B cell (primary cell): ENCODE measurements at regions of chr11 and their contacts with region 1.

Region 1: GRCh38 chr11:65888163-65888814 is at the start of gene FIBP:
- DNase-seq: peak; percentile 96
- ATAC-seq: peak; percentile 64
- H3K4me3 ChIP-seq: peak within 1 kb of the TSS; percentile 63 to 88 (median 75)
- H3K4me3 Mint-ChIP-seq: peak within 1 kb of the TSS; percentile 98
- H3K27ac ChIP-seq: peak within 1 kb of the TSS; percentile 85
- H3K27ac Mint-ChIP-seq: peak within 1 kb of the TSS; percentile 98
- H3K4me1 ChIP-seq: peaks cover 47 to 63% of the 10 kb centered on the region in 2 donors
- H3K4me1 Mint-ChIP-seq: peaks cover 66% of the 10 kb centered on the region
- H3K27me3 ChIP-seq: no peaks in the 10 kb centered on the region
- H3K27me3 Mint-ChIP-seq: no peaks in the 10 kb centered on the region
- CTCF ChIP-seq: peak; percentile 86
- total RNA-seq, gene FIBP: 59.8 and 63.4 TPM in 2 replicates

Region 2: DNA sequence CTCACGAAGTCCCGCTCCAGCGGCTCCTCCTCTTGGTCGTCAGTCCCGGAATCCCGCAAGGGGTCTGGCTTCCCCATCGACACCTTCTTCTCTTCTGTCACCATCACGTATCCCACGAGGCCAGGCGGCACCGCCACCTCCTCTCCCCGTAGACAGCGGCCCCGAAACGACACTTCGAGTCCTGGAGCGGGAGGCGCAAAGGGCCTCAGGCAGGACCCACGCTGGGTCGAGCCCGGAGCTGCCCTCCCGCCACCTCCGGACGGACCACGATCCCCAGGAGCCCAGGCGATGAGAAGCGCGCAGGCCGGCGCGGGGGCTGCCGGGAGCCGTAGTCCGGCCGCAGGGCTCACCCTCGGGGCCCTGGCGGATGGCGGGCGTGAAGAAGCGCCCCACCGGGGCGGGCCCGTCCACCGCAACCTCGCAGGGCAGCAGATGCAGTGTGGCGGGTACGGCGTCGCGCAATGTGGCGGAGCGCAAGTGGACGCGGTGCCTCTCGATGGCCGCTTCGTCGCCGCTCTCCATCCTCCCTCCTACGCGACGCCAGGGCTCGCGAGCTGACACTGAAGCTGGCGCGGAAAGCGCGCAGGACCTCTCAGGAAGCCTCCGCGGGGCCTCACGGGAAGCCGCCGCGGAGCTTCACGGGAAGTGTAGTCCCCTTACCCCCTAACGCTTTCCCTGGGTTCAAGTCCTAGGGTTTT is 167.9 kb before region 1 on chr11 and contains the start of gene RNASEH2C:
- CTCF ChIA-PET with region 1: interaction called, 14 read pairs
- POLR2A ChIA-PET with region 1: interaction called, 4 read pairs
- intact Hi-C with region 1: no loop called
- DNase-seq: peak; percentile 89
- ATAC-seq: peak; percentile 92
- H3K4me3 ChIP-seq: peak within 1 kb of the TSS; percentile 59 to 84 (median 74)
- H3K4me3 Mint-ChIP-seq: peak within 1 kb of the TSS; percentile 97
- H3K27ac ChIP-seq: peak within 1 kb of the TSS; percentile 59 to 73
- H3K27ac Mint-ChIP-seq: peak within 1 kb of the TSS; percentile 91
- H3K4me1 ChIP-seq: peaks cover 14 to 16% of the 10 kb centered on the region in 2 donors
- H3K4me1 Mint-ChIP-seq: peaks cover 35% of the 10 kb centered on the region
- H3K27me3 ChIP-seq: no peaks in the 10 kb centered on the region
- H3K27me3 Mint-ChIP-seq: no peaks in the 10 kb centered on the region
- CTCF ChIP-seq: no peak
- total RNA-seq, gene RNASEH2C: 75.3 and 81.6 TPM in 2 replicates

Region 3: GRCh38 chr11:65833297-65834030 is 54.8 kb before region 1 on chr11 and contains the start of gene SNX32:
- CTCF ChIA-PET with region 1: interaction called, 10 read pairs
- POLR2A ChIA-PET with region 1: no interaction called
- intact Hi-C with region 1: no loop called
- DNase-seq: peak; percentile 96
- ATAC-seq: peak; percentile 99
- H3K4me3 ChIP-seq: peak within 1 kb of the TSS; percentile 47 to 81 (median 67)
- H3K4me3 Mint-ChIP-seq: no peak within 1 kb of the TSS
- H3K27ac ChIP-seq: peak within 1 kb of the TSS; percentile 71 to 86
- H3K27ac Mint-ChIP-seq: peak within 1 kb of the TSS; percentile 50
- H3K4me1 ChIP-seq: peaks cover 13 to 21% of the 10 kb centered on the region in 2 donors
- H3K4me1 Mint-ChIP-seq: peaks cover 8% of the 10 kb centered on the region
- H3K27me3 ChIP-seq: peaks cover 0 to 4% (median 0%) of the 10 kb centered on the region in 4 experiments
- H3K27me3 Mint-ChIP-seq: no peaks in the 10 kb centered on the region
- CTCF ChIP-seq: no peak
- total RNA-seq, gene SNX32: 0.34 and 0.57 TPM in 2 replicates

Region 4: DNA sequence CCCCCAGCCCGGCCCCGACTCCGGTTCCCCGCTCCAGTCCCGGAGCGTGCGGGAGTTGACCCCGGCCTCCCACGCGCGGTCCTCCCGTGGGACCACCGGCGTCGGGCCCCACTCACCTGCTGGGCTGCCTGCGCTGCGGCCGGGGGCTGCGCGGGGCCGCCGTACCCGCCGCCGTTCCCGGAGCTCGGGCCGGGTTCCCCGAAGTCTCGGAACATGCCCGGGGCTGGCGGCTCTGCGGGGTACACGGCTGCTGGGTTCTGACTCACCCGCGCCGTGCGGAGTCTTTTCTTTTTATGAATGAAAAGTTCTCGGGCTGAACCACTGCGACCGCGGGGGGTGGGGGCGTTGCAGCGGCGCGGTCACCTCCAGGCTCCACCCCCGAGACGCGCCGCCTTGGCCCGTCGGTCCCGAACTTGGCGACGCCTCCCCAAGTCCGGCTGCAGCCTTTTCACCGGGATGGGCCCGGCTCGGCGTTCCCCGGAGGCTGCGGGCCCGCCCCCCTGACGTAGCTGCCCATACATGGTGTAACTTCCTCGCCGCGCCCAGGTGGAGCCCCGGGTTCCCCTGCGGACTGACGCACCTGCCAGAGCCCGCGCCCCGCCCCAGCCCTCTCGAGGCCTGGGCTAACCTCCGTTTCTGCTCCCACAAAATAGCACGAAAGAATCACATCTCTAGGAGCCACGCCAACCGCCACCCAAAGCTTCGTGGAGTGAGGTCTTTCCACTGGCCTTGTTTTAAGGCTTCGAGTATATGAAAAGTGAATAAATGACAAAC is 12.0 kb after region 1 on chr11 and contains the start of gene FOSL1:
- CTCF ChIA-PET with region 1: interaction called, 44 read pairs
- POLR2A ChIA-PET with region 1: interaction called, 33 read pairs
- intact Hi-C with region 1: loop called (anchors 1 kb)
- DNase-seq: peak; percentile 96
- ATAC-seq: peak; percentile 95
- H3K4me3 ChIP-seq: peak within 1 kb of the TSS; percentile 2 to 64 (median 52)
- H3K4me3 Mint-ChIP-seq: peak within 1 kb of the TSS; percentile 83
- H3K27ac ChIP-seq: no peak within 1 kb of the TSS
- H3K27ac Mint-ChIP-seq: peak within 1 kb of the TSS; percentile 72
- H3K4me1 ChIP-seq: peaks cover 20% of the 10 kb centered on the region in 2 donors
- H3K4me1 Mint-ChIP-seq: peaks cover 10% of the 10 kb centered on the region
- H3K27me3 ChIP-seq: peaks cover 0 to 38% (median 12%) of the 10 kb centered on the region in 4 experiments
- H3K27me3 Mint-ChIP-seq: peaks cover 15% of the 10 kb centered on the region
- CTCF ChIP-seq: no peak
- total RNA-seq, gene FOSL1: not detected in 2 replicates

Region 5: GRCh38 chr11:65934014-65934413 is 45.7 kb after region 1 on chr11:
- CTCF ChIA-PET with region 1: interaction called, 18 read pairs
- POLR2A ChIA-PET with region 1: interaction called, 4 read pairs
- intact Hi-C with region 1: loop called (anchors 2 kb)
- DNase-seq: no peak
- ATAC-seq: no peak
- H3K4me3 ChIP-seq: no peak overlapping the region
- H3K4me3 Mint-ChIP-seq: no peak overlapping the region
- H3K27ac ChIP-seq: no peak overlapping the region
- H3K27ac Mint-ChIP-seq: no peak overlapping the region
- H3K4me1 ChIP-seq: peaks cover under 1 to 1% of the 10 kb centered on the region in 2 donors
- H3K4me1 Mint-ChIP-seq: peaks cover 4% of the 10 kb centered on the region
- H3K27me3 ChIP-seq: peaks cover 0 to 3% (median 0%) of the 10 kb centered on the region in 4 experiments
- H3K27me3 Mint-ChIP-seq: no peaks in the 10 kb centered on the region
- CTCF ChIP-seq: no peak

Region 6: DNA sequence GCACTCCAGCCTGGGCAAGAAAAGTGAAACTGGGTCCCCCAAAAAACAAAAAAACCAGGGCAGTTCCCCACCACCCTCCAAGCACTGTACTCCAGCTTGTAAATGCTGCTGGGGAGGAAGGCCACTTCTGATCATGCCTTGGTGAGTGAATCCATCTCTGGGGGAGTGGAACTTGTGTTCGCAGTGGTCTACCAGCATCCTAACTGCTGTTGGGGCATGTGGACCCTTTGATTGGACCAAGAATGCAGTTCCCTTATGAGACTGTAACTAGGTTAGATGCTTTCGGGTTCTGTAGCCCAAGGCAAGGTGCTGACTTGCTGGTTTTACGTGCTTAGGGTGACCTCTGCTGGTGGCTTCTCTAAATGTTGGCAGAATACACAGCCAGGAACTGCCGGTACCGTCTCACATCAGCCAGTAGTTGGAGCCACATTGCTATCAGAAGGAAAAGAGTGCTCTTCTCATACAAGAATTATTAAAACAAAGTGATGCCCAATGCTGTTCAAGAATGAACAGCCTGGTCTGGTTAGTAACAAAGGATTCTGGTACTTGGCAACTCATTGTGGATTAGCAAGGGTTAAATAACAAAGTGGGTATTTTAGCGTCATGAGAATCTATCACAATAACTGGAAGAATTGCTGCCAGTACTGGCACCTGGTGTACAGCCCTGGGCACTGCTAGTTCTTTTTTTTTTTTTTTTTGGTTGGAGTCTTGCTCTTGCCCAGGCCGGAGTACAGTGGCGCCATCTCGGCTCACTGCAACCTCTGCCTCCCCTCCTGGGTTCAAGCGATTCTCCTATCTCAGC is 100.7 kb after region 1 on chr11:
- CTCF ChIA-PET with region 1: interaction called, 144 read pairs
- POLR2A ChIA-PET with region 1: interaction called, 4 read pairs
- intact Hi-C with region 1: loop called (anchors 1 kb)
- DNase-seq: peak; percentile 96
- ATAC-seq: peak; percentile 99
- H3K4me3 ChIP-seq: no peak overlapping the region
- H3K4me3 Mint-ChIP-seq: no peak overlapping the region
- H3K27ac ChIP-seq: no peak overlapping the region
- H3K27ac Mint-ChIP-seq: peak overlapping the region; percentile 84
- H3K4me1 ChIP-seq: peaks cover 3 to 7% of the 10 kb centered on the region in 2 donors
- H3K4me1 Mint-ChIP-seq: peaks cover 5% of the 10 kb centered on the region
- H3K27me3 ChIP-seq: no peaks in the 10 kb centered on the region
- H3K27me3 Mint-ChIP-seq: no peaks in the 10 kb centered on the region
- CTCF ChIP-seq: peak; percentile 99

Region 7: GRCh38 chr11:66045177-66045639 is 156.9 kb after region 1 on chr11:
- CTCF ChIA-PET with region 1: interaction called, 11 read pairs
- POLR2A ChIA-PET with region 1: no interaction called
- intact Hi-C with region 1: no loop called
- DNase-seq: peak; percentile 88
- ATAC-seq: peak; percentile 96
- H3K4me3 ChIP-seq: no peak overlapping the region
- H3K4me3 Mint-ChIP-seq: no peak overlapping the region
- H3K27ac ChIP-seq: no peak overlapping the region
- H3K27ac Mint-ChIP-seq: peak overlapping the region; percentile 7
- H3K4me1 ChIP-seq: peaks cover 10 to 15% of the 10 kb centered on the region in 2 donors
- H3K4me1 Mint-ChIP-seq: peaks cover 16% of the 10 kb centered on the region
- H3K27me3 ChIP-seq: peaks cover 0 to 35% (median 5%) of the 10 kb centered on the region in 4 experiments
- H3K27me3 Mint-ChIP-seq: peaks cover 12% of the 10 kb centered on the region
- CTCF ChIP-seq: peak; percentile 94